B cell (primary cell): ENCODE measurements at regions of chr3 and their contacts with region 1.

Region 1: DNA sequence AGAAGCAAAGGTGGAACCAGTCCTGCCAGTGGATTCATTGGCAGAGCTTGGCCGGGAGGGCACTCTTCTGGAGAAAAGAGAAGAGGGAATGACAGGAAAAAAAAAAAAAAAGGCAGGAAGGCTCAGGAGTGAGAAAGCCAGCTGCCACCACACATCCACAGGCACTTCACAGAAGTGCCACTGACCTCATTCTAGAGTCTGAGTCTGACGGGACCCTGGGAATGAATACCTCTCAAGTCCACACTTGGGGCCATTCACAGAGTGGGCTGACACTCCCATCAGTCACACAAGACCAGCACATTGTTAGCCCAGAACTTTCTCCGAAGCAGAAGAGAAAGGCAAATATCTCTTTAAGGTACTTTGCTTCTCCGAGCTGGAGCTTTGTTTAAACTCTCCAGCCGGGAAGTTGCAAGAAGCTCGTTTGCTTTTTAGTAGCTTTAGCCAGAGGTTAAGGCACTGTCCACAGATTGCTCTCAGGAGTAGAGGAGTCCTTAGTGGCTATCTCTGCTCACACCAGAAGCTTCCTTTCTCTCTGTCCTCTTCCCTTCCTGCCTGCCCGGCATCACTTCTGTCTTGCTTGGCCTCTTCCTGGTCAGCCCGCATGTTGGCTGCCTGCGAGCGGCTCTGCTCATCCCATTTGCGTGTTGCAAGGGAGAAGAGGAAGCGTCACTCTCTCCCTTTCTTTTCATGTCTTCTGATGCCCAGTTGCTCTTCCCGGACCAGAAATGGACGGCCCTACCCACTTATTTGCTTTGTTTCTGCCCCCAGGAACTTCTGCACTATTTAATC is 53.8 kb downstream of the CMTM6 start:
- DNase-seq: no peak
- ATAC-seq: no peak
- H3K4me3 ChIP-seq: no peak overlapping the region
- H3K4me3 Mint-ChIP-seq: no peak overlapping the region
- H3K27ac ChIP-seq: no peak overlapping the region
- H3K27ac Mint-ChIP-seq: no peak overlapping the region
- H3K4me1 ChIP-seq: peaks cover 10 to 20% of the 10 kb centered on the region in 2 donors
- H3K4me1 Mint-ChIP-seq: peaks cover 44% of the 10 kb centered on the region
- H3K27me3 ChIP-seq: no peaks in the 10 kb centered on the region
- H3K27me3 Mint-ChIP-seq: no peaks in the 10 kb centered on the region
- CTCF ChIP-seq: no peak

Region 2: GRCh38 chr3:32313723-32314473 is 135.0 kb before region 1 on chr3:
- CTCF ChIA-PET with region 1: no interaction called
- POLR2A ChIA-PET with region 1: no interaction called
- intact Hi-C with region 1: no loop called
- DNase-seq: no peak
- ATAC-seq: no peak
- H3K4me3 ChIP-seq: no peak overlapping the region
- H3K4me3 Mint-ChIP-seq: no peak overlapping the region
- H3K27ac ChIP-seq: no peak overlapping the region
- H3K27ac Mint-ChIP-seq: no peak overlapping the region
- H3K4me1 ChIP-seq: peaks cover 0 to 5% of the 10 kb centered on the region in 2 donors
- H3K4me1 Mint-ChIP-seq: peaks cover 6% of the 10 kb centered on the region
- H3K27me3 ChIP-seq: no peaks in the 10 kb centered on the region
- H3K27me3 Mint-ChIP-seq: peaks cover 17% of the 10 kb centered on the region
- CTCF ChIP-seq: no peak

Region 3: GRCh38 chr3:32414520-32415202 is 34.2 kb before region 1 on chr3:
- CTCF ChIA-PET with region 1: no interaction called
- POLR2A ChIA-PET with region 1: interaction called, 11 read pairs
- intact Hi-C with region 1: no loop called
- DNase-seq: peak; percentile 63
- ATAC-seq: peak; percentile 87
- H3K4me3 ChIP-seq: no peak overlapping the region
- H3K4me3 Mint-ChIP-seq: peak overlapping the region; percentile 48
- H3K27ac ChIP-seq: peak overlapping the region; percentile 71 to 73
- H3K27ac Mint-ChIP-seq: peak overlapping the region; percentile 88
- H3K4me1 ChIP-seq: peaks cover 31 to 33% of the 10 kb centered on the region in 2 donors
- H3K4me1 Mint-ChIP-seq: peaks cover 61% of the 10 kb centered on the region
- H3K27me3 ChIP-seq: no peaks in the 10 kb centered on the region
- H3K27me3 Mint-ChIP-seq: no peaks in the 10 kb centered on the region
- CTCF ChIP-seq: no peak